CD8-positive, alpha-beta T cell (primary cell): ENCODE measurements at regions of chr12 and their contacts with region 1.

Region 1: DNA sequence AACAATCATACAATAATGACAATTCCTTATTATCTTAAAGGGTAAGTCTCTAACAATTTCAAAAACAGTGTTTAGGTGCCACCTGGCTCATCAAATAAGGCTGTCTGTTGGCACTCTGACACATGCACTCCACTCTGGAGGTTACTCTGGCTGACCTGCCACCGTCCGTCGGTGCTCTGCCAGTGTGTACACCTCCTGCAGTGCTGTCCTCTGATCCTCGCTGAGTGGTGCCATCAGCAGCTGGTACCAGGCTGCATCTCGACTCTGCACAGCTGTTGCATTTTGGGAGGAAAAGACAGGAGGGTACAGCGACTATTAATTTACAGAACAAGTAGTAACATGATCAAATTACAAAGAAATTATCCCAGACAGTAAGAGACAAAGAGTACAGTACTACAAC is 63.9 kb downstream of the IPO8 start:
- DNase-seq: no peak
- ATAC-seq: no peak
- H3K4me3 ChIP-seq: no peak overlapping the region
- H3K4me3 Mint-ChIP-seq: no peak overlapping the region
- H3K27ac ChIP-seq: no peak overlapping the region
- H3K27ac Mint-ChIP-seq: no peak overlapping the region
- H3K4me1 ChIP-seq: no peaks in the 10 kb centered on the region
- H3K4me1 Mint-ChIP-seq: no peaks in the 10 kb centered on the region
- H3K27me3 ChIP-seq: no peaks in the 10 kb centered on the region
- H3K27me3 Mint-ChIP-seq: no peaks in the 10 kb centered on the region
- CTCF ChIP-seq: no peak

Region 2: DNA sequence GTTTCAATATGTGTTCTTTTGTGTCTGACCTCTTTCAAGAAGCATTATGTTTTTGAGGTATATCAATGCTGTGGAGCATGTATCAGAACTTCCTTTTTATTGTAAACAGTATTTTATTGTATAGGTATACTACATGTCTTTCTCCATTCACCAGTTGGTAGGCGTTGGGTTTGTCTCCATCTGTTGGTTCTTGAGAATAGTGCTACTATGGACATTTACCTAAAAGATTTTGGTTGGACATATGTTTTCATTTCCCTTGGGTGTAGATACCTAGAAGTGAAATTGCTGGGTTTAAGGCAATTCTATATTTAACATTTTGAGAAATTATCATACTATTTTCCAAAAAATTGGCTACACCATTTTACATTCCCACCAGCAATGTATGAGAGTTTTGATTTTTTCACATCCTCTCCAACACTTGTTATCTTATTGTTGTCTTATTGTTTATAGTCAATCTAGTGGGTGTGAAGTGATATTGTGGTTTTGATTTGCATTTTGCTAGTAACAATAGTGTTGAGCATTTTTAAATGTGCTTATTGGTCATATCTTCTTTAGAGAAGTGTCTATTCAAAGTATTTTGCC is 345.3 kb before region 1 on chr12:
- CTCF ChIA-PET with region 1: no interaction called
- POLR2A ChIA-PET with region 1: no interaction called
- intact Hi-C with region 1: no loop called
- DNase-seq: no peak
- ATAC-seq: no peak
- H3K4me3 ChIP-seq: no peak overlapping the region
- H3K4me3 Mint-ChIP-seq: no peak overlapping the region
- H3K27ac ChIP-seq: no peak overlapping the region
- H3K27ac Mint-ChIP-seq: no peak overlapping the region
- H3K4me1 ChIP-seq: no peaks in the 10 kb centered on the region
- H3K4me1 Mint-ChIP-seq: no peaks in the 10 kb centered on the region
- H3K27me3 ChIP-seq: no peaks in the 10 kb centered on the region
- H3K27me3 Mint-ChIP-seq: peaks cover 2% of the 10 kb centered on the region
- CTCF ChIP-seq: no peak

Region 3: DNA sequence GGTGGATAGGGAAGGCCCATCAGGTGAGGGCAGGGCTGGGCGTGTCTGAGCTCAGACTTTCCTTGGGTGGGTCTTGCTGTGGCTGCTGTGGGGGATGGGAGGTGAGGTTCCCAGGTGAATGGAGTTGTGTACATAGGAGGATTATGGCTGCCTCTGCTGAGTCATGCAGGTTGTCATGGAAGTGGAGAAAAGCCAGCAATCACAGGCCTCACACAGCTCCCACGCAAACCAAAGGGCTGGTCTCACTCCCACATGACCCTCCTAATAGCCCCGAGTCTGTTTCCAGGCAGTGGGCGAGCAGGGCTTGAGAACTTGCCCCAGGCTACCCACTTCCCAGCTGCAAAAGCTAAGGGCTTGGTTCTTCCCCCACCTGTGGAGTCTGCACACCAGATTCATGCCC is 85.6 kb before region 1 on chr12:
- CTCF ChIA-PET with region 1: no interaction called
- POLR2A ChIA-PET with region 1: no interaction called
- intact Hi-C with region 1: no loop called
- DNase-seq: no peak
- ATAC-seq: no peak
- H3K4me3 ChIP-seq: no peak overlapping the region
- H3K4me3 Mint-ChIP-seq: no peak overlapping the region
- H3K27ac ChIP-seq: no peak overlapping the region
- H3K27ac Mint-ChIP-seq: no peak overlapping the region
- H3K4me1 ChIP-seq: no peaks in the 10 kb centered on the region
- H3K4me1 Mint-ChIP-seq: no peaks in the 10 kb centered on the region
- H3K27me3 ChIP-seq: no peaks in the 10 kb centered on the region
- H3K27me3 Mint-ChIP-seq: peaks cover 4% of the 10 kb centered on the region
- CTCF ChIP-seq: no peak

Region 4: DNA sequence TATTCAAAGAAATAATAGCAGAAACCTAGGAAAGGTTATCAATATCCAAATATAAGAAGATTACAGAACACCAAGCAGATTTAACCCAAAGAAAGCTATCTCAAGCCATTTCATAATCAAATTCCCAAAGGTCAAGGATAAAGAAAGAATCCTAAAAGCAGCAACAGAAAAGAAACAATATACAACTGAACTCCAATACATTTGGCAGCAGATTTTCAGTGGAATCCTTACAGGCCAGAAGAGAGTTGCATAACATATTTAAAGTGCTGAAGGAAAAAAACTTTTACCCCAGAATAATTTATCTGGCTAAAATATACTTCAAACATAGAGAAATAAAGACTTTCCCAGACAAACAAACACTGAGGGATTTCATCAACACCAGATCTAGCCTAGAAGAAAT is 904.9 kb after region 1 on chr12:
- CTCF ChIA-PET with region 1: no interaction called
- POLR2A ChIA-PET with region 1: no interaction called
- intact Hi-C with region 1: loop called in 1 of 2 experiments (anchors 10 kb)
- DNase-seq: no peak
- ATAC-seq: no peak
- H3K4me3 ChIP-seq: no peak overlapping the region
- H3K4me3 Mint-ChIP-seq: no peak overlapping the region
- H3K27ac ChIP-seq: no peak overlapping the region
- H3K27ac Mint-ChIP-seq: no peak overlapping the region
- H3K4me1 ChIP-seq: no peaks in the 10 kb centered on the region
- H3K4me1 Mint-ChIP-seq: no peaks in the 10 kb centered on the region
- H3K27me3 ChIP-seq: no peaks in the 10 kb centered on the region
- H3K27me3 Mint-ChIP-seq: peaks cover 15% of the 10 kb centered on the region
- CTCF ChIP-seq: no peak